ENCODE measurements at regions of chr14 and their contacts with region 1.

Region 1: GRCh38 chr14:58501214-58501816 is 73.8 kb downstream of the KIAA0586 start:
- DNase-seq: no peak

Region 2: DNA sequence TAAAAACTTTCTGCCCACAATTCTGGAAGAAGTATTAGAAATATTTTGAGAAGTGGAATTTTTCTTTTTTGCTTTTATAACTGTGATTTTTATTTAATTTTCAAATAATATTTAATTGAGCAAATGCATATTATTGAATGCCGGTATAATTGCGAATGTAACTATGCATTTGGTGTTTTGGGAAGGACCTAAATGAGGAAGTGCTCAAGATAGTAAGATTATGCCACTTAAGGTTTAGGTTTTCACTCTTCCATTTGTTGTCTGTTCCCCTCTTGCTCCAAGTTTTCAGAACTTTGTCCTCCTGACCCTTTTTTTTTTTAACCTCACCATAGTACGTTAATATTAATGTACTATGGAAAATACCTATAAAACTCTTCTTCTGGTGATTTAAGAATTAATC is 12.0 kb after region 1 on chr14:
- intact Hi-C with region 1: no loop called
- DNase-seq: no peak

Region 3: DNA sequence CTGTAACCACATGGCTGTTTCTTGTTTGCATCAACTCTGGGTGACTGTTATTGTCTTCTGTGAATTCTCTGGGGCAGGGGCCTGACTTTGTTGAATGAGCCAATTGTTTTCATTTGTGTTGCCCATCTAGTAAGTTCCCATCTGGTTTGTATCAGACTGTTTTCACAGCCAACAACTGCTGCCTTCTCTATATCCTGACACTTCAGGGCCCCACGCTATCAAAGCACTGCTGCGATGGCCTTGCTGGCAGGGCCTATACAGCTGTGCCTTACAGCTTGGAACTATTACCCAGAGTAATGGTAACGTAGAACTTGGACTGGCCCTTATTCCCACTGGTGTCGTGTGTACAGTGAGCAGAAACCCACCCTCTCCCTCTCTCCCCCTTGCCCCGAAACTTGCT is 32.1 kb after region 1 on chr14:
- intact Hi-C with region 1: no loop called
- DNase-seq: no peak

Region 4: GRCh38 chr14:58637391-58638230 is 136.3 kb after region 1 on chr14 and contains the start of gene DACT1:
- intact Hi-C with region 1: loop called (anchors 5 to 10 kb)
- DNase-seq: peak; percentile 90
- total RNA-seq, gene DACT1: 13.7 to 18.8 TPM

Region 5: DNA sequence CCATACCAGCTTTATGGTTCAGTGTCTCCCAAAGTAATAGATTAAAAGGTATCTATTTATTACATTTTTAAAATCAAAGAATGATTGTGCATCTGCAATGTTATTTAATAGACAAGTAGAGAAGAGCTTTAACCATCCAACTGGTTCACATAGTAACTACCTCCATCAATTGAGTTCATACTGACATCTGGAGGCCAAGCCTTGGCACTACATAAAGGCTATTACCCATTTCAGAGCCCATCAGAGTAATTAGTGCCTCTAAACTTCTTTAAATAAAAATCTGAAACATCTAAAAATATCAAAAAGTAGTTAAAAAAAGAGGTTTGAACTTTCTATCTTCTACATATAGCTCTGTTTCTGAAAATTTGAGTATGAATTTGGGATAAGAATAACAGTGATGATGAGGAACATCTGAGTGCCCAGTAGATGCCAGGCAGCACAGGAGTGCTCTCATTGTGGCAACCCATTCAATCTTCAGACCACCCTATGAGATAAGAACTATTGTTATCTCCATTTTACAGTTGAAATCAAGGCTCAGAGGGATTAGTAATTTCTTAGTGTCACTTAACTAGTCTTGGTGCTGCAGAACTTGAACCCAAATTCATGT is 554.2 kb after region 1 on chr14:
- intact Hi-C with region 1: loop called (anchors 10 kb)
- DNase-seq: no peak